Naive thymus-derived CD8-positive, alpha-beta T cell (primary cell): ENCODE measurements at regions of chr12 and their contacts with region 1.

Region 1: DNA sequence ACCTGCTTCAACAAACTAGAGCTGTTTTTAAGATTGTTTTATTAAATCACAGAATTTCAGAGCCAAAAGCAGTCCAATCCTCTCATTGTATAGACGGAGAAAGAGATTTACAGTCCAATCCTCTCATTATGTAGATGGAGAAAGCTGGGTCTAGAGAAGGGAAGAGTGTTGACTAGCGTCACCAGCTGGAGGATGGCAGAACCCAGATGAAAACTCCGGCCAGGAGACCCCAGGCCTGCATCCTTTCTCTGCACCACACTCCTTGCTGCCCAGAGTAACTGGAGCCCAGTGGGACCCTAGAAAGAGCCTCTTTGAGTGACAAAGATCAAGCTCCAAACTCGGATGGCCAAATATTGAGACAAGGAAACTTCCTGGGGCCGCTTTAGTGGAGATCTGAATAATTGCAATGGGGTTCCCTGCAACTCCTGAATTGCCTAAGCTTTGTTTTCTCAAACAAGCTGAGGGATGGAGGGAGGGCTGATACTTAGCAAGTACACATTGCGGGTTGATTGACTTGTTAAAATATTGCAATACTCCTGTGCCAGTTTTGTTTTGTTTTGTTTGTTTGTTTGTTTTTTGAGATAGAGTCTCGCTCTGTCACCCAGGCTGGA is 12.5 kb downstream of the AMDHD1 start:
- DNase-seq: no peak
- ATAC-seq: no peak
- H3K4me3 Mint-ChIP-seq: no peak overlapping the region
- H3K27ac Mint-ChIP-seq: no peak overlapping the region
- H3K4me1 Mint-ChIP-seq: no peaks in the 10 kb centered on the region
- H3K27me3 Mint-ChIP-seq: peaks cover 3 to 16% (median 15%) of the 10 kb centered on the region in 5 donors

Region 2: GRCh38 chr12:95942524-95943329 is 12.9 kb before region 1 on chr12 and contains the start of gene CCDC38:
- POLR2A ChIA-PET with region 1: interaction called, 11 read pairs
- DNase-seq: peak; percentile 67 to 91 (median 83)
- ATAC-seq: peak; percentile 91 to 95
- H3K4me3 Mint-ChIP-seq: peak within 1 kb of the TSS; percentile 91 to 98 (median 96)
- H3K27ac Mint-ChIP-seq: peak within 1 kb of the TSS; percentile 89 to 97 (median 92)
- H3K4me1 Mint-ChIP-seq: peaks cover 0 to 9% (median 7%) of the 10 kb centered on the region in 4 donors
- H3K27me3 Mint-ChIP-seq: peaks cover 0 to 1% (median 0%) of the 10 kb centered on the region in 5 donors
- polyA plus RNA-seq, gene CCDC38: not detected